ENCODE measurements at regions of chr11 and their contacts with region 1.

Region 1: DNA sequence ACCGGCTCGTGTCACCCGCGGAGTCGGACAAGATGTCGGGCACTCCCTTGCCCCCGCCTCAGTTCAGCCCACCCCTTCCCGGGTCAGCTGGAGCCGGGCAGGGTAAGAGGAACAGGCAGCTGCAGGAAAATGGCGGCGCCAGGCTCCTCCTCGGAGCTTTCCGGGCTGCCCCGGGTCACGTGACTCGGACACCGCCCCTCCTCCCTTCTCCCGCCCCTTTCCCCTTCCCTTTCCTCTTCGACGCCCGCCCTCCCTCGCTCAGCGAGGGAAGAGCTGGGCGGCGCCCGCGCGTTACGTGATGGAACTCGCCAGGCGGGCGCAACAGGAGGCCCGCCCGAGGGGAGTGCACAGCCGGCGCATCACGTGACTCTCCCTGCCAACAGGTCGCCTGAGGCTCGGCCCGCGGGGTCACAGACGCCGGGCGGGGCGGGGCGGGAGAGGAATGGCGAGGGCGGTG is at the start of gene PICALM:
- DNase-seq: peak; percentile 98
- H3K4me3 Mint-ChIP-seq: peak within 1 kb of the TSS; percentile 98
- H3K27ac Mint-ChIP-seq: peak within 1 kb of the TSS; percentile 99
- H3K4me1 Mint-ChIP-seq: peaks cover 17% of the 10 kb centered on the region
- H3K27me3 Mint-ChIP-seq: no peaks in the 10 kb centered on the region
- CTCF ChIP-seq: no peak
- total RNA-seq, gene PICALM: 137 and 141 TPM in 2 replicates

Region 2: DNA sequence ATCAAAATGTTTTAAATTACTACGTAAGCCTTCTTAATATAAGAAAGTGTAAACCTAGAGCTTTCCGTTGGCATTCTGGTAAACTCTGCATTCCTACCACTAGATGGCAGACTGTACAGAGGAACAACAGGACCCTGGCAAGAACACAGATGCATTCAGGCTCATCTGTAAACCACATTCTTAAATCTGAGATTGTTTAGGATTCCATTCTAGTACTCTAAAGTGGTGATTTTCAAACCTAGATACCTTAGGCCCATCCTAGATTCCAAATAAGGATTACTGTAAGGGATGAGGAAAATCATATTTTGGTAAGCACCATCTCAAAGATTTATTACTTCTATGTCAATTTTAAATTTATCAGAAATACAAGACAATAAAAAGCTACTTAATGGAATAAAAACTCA is 27.0 kb before region 1 on chr11:
- CTCF ChIA-PET with region 1: interaction called, 14 read pairs
- POLR2A ChIA-PET with region 1: interaction called, 57 read pairs
- intact Hi-C with region 1: loop called (anchors 2 kb)
- DNase-seq: peak; percentile 87
- H3K4me3 Mint-ChIP-seq: peak overlapping the region; percentile 2
- H3K27ac Mint-ChIP-seq: peak overlapping the region; percentile 55
- H3K4me1 Mint-ChIP-seq: peaks cover 39% of the 10 kb centered on the region
- H3K27me3 Mint-ChIP-seq: no peaks in the 10 kb centered on the region
- CTCF ChIP-seq: peak; percentile 78

Region 3: GRCh38 chr11:86116386-86116726 is 47.4 kb after region 1 on chr11:
- CTCF ChIA-PET with region 1: interaction called, 6 read pairs
- POLR2A ChIA-PET with region 1: interaction called, 34 read pairs
- intact Hi-C with region 1: no loop called
- DNase-seq: peak; percentile 77
- H3K4me3 Mint-ChIP-seq: peak overlapping the region; percentile 55
- H3K27ac Mint-ChIP-seq: peak overlapping the region; percentile 90
- H3K4me1 Mint-ChIP-seq: peaks cover 18% of the 10 kb centered on the region
- H3K27me3 Mint-ChIP-seq: no peaks in the 10 kb centered on the region
- CTCF ChIP-seq: no peak

Region 4: GRCh38 chr11:86174101-86175046 is 105.4 kb after region 1 on chr11:
- CTCF ChIA-PET with region 1: interaction called, 8 read pairs
- POLR2A ChIA-PET with region 1: interaction called, 6 read pairs
- intact Hi-C with region 1: loop called (anchors 1 kb)
- DNase-seq: peak; percentile 93
- H3K4me3 Mint-ChIP-seq: no peak overlapping the region
- H3K27ac Mint-ChIP-seq: no peak overlapping the region
- H3K4me1 Mint-ChIP-seq: peaks cover 23% of the 10 kb centered on the region
- H3K27me3 Mint-ChIP-seq: no peaks in the 10 kb centered on the region
- CTCF ChIP-seq: no peak

Region 5: DNA sequence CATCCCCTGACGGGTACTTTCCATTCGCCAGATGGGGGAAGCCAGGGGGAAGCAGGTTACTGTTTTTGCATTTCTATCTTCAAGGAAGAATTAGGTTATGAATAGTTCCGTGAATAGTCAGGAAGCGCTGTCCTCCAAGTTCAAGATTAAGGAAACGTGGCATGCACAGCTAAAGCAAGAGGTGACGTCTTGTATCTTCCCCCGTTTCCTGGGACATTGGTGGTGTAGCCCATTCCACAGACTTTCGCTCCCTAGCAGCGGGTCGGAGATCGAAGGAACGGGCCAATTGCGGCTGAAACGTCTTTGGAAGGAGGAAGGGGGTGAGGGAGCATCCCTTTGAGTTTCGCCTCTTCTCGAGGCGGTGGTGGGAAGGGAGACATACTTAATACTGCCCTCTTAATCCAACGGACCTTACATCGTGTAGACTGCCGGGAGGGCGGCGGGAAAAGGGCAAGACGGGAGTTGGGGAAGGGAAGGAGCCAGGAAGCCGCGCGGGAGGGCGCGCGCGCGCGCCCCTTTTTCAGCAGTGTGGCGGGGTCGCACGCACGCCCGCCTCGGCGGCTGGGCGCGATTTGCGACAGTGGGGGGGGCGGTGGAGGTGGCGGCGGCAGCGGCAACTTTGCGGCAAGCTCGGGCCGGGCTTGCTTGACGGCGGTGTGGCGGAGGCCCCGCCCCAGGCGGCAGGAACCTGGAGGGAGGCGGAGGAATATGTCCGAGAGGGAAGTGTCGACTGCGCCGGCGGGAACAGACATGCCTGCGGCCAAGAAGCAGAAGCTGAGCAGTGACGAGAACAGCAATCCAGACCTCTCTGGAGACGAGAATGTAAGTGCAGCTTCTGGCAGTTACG is 175.8 kb after region 1 on chr11 and contains the start of gene EED:
- CTCF ChIA-PET with region 1: no interaction called
- POLR2A ChIA-PET with region 1: interaction called, 40 read pairs
- intact Hi-C with region 1: no loop called
- DNase-seq: peak; percentile 91
- H3K4me3 Mint-ChIP-seq: no peak within 1 kb of the TSS
- H3K27ac Mint-ChIP-seq: no peak within 1 kb of the TSS
- H3K4me1 Mint-ChIP-seq: peaks cover 30% of the 10 kb centered on the region
- H3K27me3 Mint-ChIP-seq: no peaks in the 10 kb centered on the region
- CTCF ChIP-seq: no peak
- total RNA-seq, gene EED: 20.9 and 22.9 TPM in 2 replicates